Pancreas (tissue), 10 donors: ENCODE measurements at regions of chr19 and their contacts with region 1.

Region 1: GRCh38 chr19:42295831-42296525 is 6.0 kb upstream of the PRR19 start:
- DNase-seq: peak; percentile 71 to 97 (median 86)
- ATAC-seq: peak; percentile 73 to 93 (median 86)
- H3K4me3 ChIP-seq: no peak overlapping the region
- H3K27ac ChIP-seq: no peak overlapping the region
- H3K4me1 ChIP-seq: no peaks in the 10 kb centered on the region
- H3K27me3 ChIP-seq: no peaks in the 10 kb centered on the region
- CTCF ChIP-seq: peak; percentile 86 to 91 (median 89)

Region 2: GRCh38 chr19:42132851-42133528 is 163.0 kb before region 1 on chr19:
- intact Hi-C with region 1: loop called in 1 of 3 experiments (anchors 10 kb)
- DNase-seq: peak; percentile 62 to 96 (median 85)
- ATAC-seq: peak; percentile 92 to 97 (median 96)
- H3K4me3 ChIP-seq: peak overlapping the region in 2 of 4 donors; percentile 21 to 29
- H3K27ac ChIP-seq: no peak overlapping the region
- H3K4me1 ChIP-seq: no peaks in the 10 kb centered on the region
- H3K27me3 ChIP-seq: peaks cover 0 to 6% (median 0%) of the 10 kb centered on the region in 4 donors
- CTCF ChIP-seq: peak; percentile 95 to 99 (median 96)

Region 3: DNA sequence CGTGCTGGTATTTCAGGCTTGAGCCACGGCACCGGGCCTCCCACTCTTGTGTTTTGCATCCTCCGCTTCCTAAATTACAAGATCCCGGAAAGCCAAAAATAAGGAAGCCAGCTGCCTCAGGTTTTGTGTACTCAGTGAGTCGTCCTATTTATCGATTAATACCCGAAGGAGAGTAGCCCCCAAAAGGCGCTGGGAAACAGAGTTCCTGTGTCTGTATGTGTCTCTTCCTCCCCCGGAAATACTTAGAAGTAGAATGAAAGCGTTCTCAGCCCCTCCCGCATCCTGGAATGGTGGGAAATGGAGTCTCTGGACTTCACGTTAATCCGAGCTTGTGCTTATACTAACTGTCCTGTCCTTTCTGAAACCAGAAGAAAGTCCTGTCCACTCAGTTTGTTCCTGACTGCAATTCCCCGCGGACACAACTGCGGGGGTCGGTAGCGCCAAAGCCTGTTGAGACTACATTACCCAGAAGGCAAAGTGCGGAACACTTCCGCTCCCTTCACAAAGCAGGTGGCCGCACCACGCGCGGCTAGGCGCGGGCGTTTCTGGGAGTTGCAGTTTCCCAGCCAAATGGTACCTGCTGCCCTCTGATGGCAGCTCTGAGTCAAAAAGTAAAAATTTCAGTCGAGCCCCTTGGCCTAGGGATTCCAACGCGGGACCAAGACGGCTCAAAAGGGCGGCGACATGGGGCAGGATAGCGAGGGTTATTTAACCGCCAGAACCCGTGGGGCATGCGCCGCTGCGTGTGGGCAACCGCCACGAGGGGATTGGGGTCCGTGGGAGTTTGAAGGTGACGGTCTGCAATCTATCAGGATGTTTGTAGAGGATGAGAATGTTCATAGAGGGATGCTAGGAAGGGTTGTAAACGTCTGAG is 51.4 kb before region 1 on chr19:
- intact Hi-C with region 1: loop called in 1 of 3 experiments (anchors 10 kb)
- DNase-seq: peak; percentile 89 to 95 (median 91)
- ATAC-seq: peak; percentile 42 to 69 (median 60)
- H3K4me3 ChIP-seq: peak overlapping the region; percentile 26 to 91 (median 57)
- H3K27ac ChIP-seq: peak overlapping the region; percentile 67 to 92 (median 83)
- H3K4me1 ChIP-seq: peaks cover 0 to 16% (median 7%) of the 10 kb centered on the region in 3 donors
- H3K27me3 ChIP-seq: no peaks in the 10 kb centered on the region
- CTCF ChIP-seq: peak in 3 of 4 donors; percentile 14 to 34 (median 31)